Panc1 (cell line): ENCODE measurements at regions of chr12 and their contacts with region 1.

Region 1: DNA sequence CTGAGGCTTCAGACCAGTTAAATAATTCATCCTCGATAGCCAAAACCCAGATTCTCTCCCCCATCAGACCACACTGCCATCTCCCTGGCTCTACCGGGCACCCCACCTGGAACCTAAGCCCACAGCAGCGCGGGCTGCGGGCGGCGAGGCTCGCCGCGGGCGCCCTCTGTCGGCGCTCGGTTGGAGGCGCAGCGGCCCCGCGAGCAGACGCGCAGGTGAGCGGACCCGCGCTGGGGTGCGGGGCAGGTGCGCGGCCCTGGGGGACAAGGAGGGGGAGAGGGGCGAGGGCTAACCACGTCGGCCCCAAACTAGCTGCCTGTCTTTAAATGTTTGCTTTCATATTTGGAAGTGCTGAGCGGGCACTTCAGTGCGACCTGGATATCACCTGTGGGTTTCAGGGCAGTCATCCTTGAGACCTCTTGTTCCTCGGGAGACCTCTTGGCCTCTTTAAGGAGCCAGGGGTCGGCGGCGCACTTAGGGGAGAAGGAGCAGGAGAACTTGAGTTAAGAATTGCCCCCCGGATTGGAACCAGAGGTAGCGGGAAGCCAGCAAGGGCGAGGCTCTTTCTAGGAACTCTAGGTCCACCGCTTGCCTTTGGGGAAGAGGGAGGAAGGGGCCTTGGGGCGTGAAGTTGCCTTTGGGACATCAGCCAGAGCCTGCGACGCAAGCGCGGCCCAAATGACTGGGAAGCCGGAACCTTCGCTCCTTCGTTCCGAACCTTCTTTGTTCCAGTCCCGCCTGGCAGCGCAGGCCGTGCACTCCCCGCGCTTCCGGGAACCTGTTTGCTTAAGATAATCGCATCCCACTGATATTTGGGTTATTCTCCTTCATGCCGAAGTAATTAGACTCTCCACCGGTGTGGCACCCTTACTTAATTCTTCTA is 78.7 kb downstream of the NEDD1 start:
- DNase-seq: no peak
- ATAC-seq: peak; percentile 87
- H3K4me3 ChIP-seq: peak overlapping the region; percentile 27 to 48
- H3K27ac ChIP-seq: no peak overlapping the region
- H3K4me1 ChIP-seq: peaks cover 6% of the 10 kb centered on the region; the same call in 1 of the 2 replicates
- H3K27me3 ChIP-seq: peaks cover 12% of the 10 kb centered on the region
- CTCF ChIP-seq: peak; percentile 98

Region 2: GRCh38 chr12:96578526-96579125 is 407.1 kb before region 1 on chr12:
- CTCF ChIA-PET with region 1: no interaction called
- POLR2A ChIA-PET with region 1: no interaction called
- in situ Hi-C with region 1: no loop called
- intact Hi-C with region 1: loop called (anchors 1 kb)
- DNase-seq: no peak
- ATAC-seq: peak; percentile 82; the same call in 1 of the 2 replicates
- H3K4me3 ChIP-seq: no peak overlapping the region
- H3K27ac ChIP-seq: no peak overlapping the region
- H3K4me1 ChIP-seq: no peaks in the 10 kb centered on the region
- H3K27me3 ChIP-seq: peaks cover 5% of the 10 kb centered on the region; the same call in 1 of the 2 replicates
- CTCF ChIP-seq: peak; percentile 67; the same call in 1 of the 2 replicates

Region 3: GRCh38 chr12:97006585-97006984 is 20.9 kb after region 1 on chr12:
- CTCF ChIA-PET with region 1: no interaction called
- POLR2A ChIA-PET with region 1: no interaction called
- in situ Hi-C with region 1: no loop called
- intact Hi-C with region 1: no loop called
- DNase-seq: no peak
- ATAC-seq: no peak
- H3K4me3 ChIP-seq: no peak overlapping the region
- H3K27ac ChIP-seq: no peak overlapping the region
- H3K4me1 ChIP-seq: no peaks in the 10 kb centered on the region
- H3K27me3 ChIP-seq: no peaks in the 10 kb centered on the region
- CTCF ChIP-seq: no peak

Region 4: DNA sequence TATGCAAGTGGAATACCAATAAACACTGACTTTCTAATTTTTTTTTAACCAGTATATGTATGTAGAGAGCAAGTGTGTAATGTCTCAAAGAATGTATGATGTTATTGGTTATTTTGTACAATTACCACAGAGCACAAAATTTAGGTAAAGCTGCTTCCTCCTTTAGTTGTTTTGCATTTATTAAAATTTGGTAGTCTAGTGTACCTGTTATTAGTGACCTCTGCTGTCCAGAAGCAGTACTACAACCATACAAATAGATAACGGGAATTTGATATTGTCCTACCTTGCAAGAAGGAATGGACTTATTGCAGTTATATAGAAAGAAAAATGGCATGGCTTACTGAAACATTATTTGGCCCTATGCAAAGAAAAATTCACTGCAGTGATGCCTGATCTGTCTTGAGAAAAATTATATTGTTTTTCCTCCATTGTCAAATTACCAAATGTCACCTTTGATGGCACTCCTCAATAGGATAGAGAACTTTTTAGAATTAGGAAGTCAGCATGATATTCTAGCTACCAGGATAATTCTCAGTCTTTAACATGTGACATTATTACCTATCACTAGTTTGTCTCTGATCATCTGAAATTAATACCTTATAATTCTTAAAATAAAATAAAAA is 323.0 kb after region 1 on chr12:
- CTCF ChIA-PET with region 1: no interaction called
- POLR2A ChIA-PET with region 1: no interaction called
- in situ Hi-C with region 1: no loop called
- intact Hi-C with region 1: loop called (anchors 2 kb)
- DNase-seq: peak; percentile 35
- ATAC-seq: no peak
- H3K4me3 ChIP-seq: no peak overlapping the region
- H3K27ac ChIP-seq: no peak overlapping the region
- H3K4me1 ChIP-seq: no peaks in the 10 kb centered on the region
- H3K27me3 ChIP-seq: no peaks in the 10 kb centered on the region
- CTCF ChIP-seq: peak; percentile 73; the same call in 1 of the 2 replicates

Region 5: GRCh38 chr12:97404543-97404942 is 418.8 kb after region 1 on chr12:
- CTCF ChIA-PET with region 1: no interaction called
- POLR2A ChIA-PET with region 1: no interaction called
- in situ Hi-C with region 1: no loop called
- intact Hi-C with region 1: loop called (anchors 10 kb)
- DNase-seq: peak; percentile 12
- ATAC-seq: 0 out of 2 replicates have a peak, but pooled peaks have one; percentile 72
- H3K4me3 ChIP-seq: no peak overlapping the region
- H3K27ac ChIP-seq: no peak overlapping the region
- H3K4me1 ChIP-seq: no peaks in the 10 kb centered on the region
- H3K27me3 ChIP-seq: no peaks in the 10 kb centered on the region
- CTCF ChIP-seq: peak; percentile 88

Region 6: DNA sequence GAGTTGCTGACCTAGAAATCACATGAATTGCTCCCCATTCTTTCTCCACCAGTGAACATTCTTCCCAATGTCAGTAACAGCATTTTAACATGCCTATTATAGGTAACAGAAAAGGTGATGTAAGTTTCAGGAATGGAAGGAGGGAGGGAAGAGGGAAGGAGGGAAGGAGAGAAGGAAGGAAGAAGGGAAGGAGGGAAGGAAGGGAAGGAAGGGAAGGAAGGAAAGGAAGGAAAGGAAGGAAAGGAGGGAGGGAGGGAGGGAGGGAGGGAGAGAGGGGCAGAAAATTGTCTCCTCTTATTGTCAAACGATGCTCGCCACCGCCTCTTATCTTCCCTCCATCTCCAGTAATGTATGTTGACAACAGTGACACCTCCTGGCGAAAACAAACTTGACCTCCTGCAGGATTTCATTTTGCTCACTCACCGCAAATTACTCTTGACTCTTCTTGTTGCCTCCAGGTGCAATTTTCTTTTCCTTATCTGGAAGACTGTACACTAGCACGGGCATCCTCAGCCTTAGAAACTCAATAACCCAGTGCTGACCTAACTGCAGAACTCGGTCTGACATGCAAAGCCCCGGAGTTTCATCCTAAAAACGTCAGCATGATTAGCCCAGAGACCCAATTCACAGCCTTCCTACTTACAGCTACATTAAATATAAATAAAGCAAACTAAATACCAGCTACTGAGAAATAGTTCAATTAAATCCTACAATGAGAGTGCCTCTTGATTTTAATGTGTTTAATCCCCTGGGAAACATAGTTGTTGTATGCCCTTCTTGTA is 1017.2 kb after region 1 on chr12:
- CTCF ChIA-PET with region 1: no interaction called
- POLR2A ChIA-PET with region 1: no interaction called
- in situ Hi-C with region 1: no loop called
- intact Hi-C with region 1: loop called (anchors 10 kb)
- DNase-seq: no peak
- ATAC-seq: no peak
- H3K4me3 ChIP-seq: no peak overlapping the region
- H3K27ac ChIP-seq: no peak overlapping the region
- H3K4me1 ChIP-seq: no peaks in the 10 kb centered on the region
- H3K27me3 ChIP-seq: no peaks in the 10 kb centered on the region
- CTCF ChIP-seq: peak; percentile 72

Region 7: GRCh38 chr12:98373025-98373554 is 1387.4 kb after region 1 on chr12:
- CTCF ChIA-PET with region 1: no interaction called
- POLR2A ChIA-PET with region 1: no interaction called
- in situ Hi-C with region 1: no loop called
- intact Hi-C with region 1: loop called (anchors 5 kb)
- DNase-seq: no peak
- ATAC-seq: peak; percentile 72
- H3K4me3 ChIP-seq: no peak overlapping the region
- H3K27ac ChIP-seq: no peak overlapping the region
- H3K4me1 ChIP-seq: no peaks in the 10 kb centered on the region; the same call in 1 of the 2 replicates
- H3K27me3 ChIP-seq: peaks cover 7% of the 10 kb centered on the region
- CTCF ChIP-seq: peak; percentile 76

Region 8: DNA sequence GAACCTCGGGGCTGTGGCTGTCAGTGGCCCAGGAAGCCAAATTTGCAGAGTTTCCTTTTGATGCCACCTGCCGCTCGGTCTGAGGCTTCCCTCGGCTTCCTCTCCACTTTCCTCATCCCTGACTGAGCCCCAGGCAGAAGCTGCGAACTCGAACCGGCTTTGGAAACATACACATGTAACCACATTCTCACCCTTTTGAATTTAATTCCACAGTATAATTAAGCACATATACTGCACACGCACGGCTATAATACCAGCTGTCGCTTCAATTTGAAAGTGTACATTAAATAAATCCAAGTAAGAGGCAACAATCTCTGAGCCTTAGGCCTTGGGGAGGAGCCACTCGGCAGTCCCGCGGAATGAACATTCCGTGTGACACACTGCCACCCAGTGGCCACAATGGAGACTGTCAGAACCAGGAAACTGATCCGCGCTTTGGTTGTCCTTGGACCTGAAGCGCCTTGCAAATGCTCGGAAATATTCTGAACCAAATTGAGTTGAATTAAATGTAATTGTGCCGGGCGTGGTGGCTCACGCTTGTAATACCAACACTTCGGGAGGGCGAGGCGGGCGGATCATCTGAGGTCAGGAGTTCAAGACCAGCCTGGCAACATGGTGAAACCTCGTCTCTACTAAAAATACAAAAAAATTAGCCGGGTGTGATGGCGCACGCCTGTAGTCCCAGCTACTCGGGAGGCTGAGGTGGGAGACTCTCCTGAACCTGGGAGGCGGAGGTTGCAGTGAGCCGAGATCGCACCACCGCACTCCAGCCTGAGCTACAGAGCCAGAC is 1411.8 kb after region 1 on chr12:
- CTCF ChIA-PET with region 1: no interaction called
- POLR2A ChIA-PET with region 1: no interaction called
- in situ Hi-C with region 1: no loop called
- intact Hi-C with region 1: loop called (anchors 5 kb)
- DNase-seq: peak; percentile 41
- ATAC-seq: peak; percentile 99
- H3K4me3 ChIP-seq: peak overlapping the region; percentile 32 to 59
- H3K27ac ChIP-seq: no peak overlapping the region
- H3K4me1 ChIP-seq: peaks cover 3% of the 10 kb centered on the region; the same call in 1 of the 2 replicates
- H3K27me3 ChIP-seq: no peaks in the 10 kb centered on the region
- CTCF ChIP-seq: peak; percentile 91